Activated CD4-positive, alpha-beta T cell treated with anti-CD3 and anti-CD28 coated beads for 36 hours (primary cell): ENCODE measurements at regions of chr7 and their contacts with region 1.

Region 1: GRCh38 chr7:106736508-106737201 is 75.7 kb upstream of the CCDC71L start:
- DNase-seq: peak; percentile 60
- ATAC-seq: peak; percentile 95
- H3K4me3 Mint-ChIP-seq: no peak overlapping the region
- H3K27ac Mint-ChIP-seq: peak overlapping the region; percentile 75
- H3K4me1 Mint-ChIP-seq: peaks cover 37% of the 10 kb centered on the region
- H3K27me3 Mint-ChIP-seq: no peaks in the 10 kb centered on the region

Region 2: DNA sequence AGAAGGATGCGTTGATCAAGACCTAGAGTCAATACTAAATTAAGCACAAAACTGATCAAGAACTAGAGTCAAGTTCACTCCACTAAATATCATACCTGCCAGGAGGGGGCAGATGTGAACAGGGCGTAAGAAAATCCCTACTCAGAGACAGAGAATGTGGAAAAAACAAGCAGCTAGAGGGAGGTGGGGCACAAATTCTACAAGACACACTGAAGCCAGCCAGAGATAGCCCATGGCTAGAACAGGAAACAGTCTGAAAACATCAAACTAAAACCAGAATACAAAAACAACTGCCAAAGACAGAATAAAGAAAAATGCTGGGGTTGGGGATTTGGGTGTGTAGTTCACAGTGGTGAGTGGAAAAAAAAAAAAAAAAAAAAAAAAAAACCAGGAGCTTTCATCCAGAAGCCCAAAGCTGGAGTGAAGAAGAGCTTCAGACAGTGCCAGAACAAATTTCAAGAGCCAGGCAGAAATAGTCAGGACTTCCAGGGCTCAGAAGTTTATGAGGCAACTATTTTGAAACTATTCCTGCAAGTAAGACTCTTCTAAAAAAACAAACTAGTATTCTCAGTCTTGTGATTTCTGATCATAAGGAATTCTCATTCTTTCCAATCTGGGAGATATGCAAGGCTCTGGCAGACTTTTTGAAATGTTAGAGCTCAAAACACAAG is 194.0 kb before region 1 on chr7:
- CTCF ChIA-PET with region 1: interaction called, 30 read pairs
- POLR2A ChIA-PET with region 1: no interaction called
- intact Hi-C with region 1: loop called (anchors 1 kb)
- DNase-seq: peak; percentile 70
- ATAC-seq: peak; percentile 91
- H3K4me3 Mint-ChIP-seq: no peak overlapping the region
- H3K27ac Mint-ChIP-seq: peak overlapping the region; percentile 4
- H3K4me1 Mint-ChIP-seq: peaks cover 8% of the 10 kb centered on the region
- H3K27me3 Mint-ChIP-seq: peaks cover 3% of the 10 kb centered on the region

Region 3: GRCh38 chr7:106604303-106604923 is 132.2 kb before region 1 on chr7:
- CTCF ChIA-PET with region 1: no interaction called
- POLR2A ChIA-PET with region 1: no interaction called
- intact Hi-C with region 1: loop called in 1 of 2 experiments (anchors 5 kb)
- DNase-seq: peak; percentile 52
- ATAC-seq: peak; percentile 96
- H3K4me3 Mint-ChIP-seq: no peak overlapping the region
- H3K27ac Mint-ChIP-seq: no peak overlapping the region
- H3K4me1 Mint-ChIP-seq: peaks cover 6% of the 10 kb centered on the region
- H3K27me3 Mint-ChIP-seq: no peaks in the 10 kb centered on the region

Region 4: DNA sequence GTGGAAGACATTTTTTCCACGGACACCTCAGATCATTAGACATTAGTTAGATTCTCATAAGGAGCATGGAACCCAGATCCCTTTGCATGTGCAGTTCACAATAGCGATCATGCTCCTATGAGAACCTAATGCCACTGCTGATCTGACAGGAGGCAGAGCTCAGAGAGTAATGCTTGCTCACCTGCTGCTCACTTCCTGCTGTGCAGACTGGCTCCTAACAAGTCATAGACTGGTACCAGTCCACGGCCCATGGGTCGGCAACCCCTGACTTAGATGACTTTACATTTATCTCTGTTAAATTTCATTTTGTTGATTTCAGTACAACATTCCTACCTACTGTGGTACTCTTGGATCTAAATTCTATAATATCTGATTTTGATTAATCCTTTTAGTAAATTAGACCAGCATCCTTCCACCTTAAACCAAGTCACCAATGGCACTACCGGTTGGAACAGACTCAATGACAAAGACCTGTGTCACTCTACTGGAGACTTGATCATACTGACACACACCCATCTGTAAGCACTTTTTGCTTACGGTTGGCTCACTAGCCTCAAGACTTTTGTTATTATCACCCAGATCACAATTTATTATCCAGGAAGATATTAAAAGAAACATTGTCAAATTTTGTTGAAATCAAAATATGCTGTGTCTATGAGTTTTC is 67.7 kb before region 1 on chr7:
- CTCF ChIA-PET with region 1: interaction called, 24 read pairs
- POLR2A ChIA-PET with region 1: no interaction called
- intact Hi-C with region 1: no loop called
- DNase-seq: peak; percentile 16
- ATAC-seq: no peak
- H3K4me3 Mint-ChIP-seq: no peak overlapping the region
- H3K27ac Mint-ChIP-seq: no peak overlapping the region
- H3K4me1 Mint-ChIP-seq: peaks cover 9% of the 10 kb centered on the region
- H3K27me3 Mint-ChIP-seq: no peaks in the 10 kb centered on the region

Region 5: GRCh38 chr7:107743567-107744344 is 1007.1 kb after region 1 on chr7 and contains the start of gene CBLL1:
- CTCF ChIA-PET with region 1: no interaction called
- POLR2A ChIA-PET with region 1: no interaction called
- intact Hi-C with region 1: no loop called
- DNase-seq: peak; percentile 99
- ATAC-seq: peak; percentile 94
- H3K4me3 Mint-ChIP-seq: peak within 1 kb of the TSS; percentile 88
- H3K27ac Mint-ChIP-seq: peak within 1 kb of the TSS; percentile 100
- H3K4me1 Mint-ChIP-seq: peaks cover 44% of the 10 kb centered on the region
- H3K27me3 Mint-ChIP-seq: no peaks in the 10 kb centered on the region
- total RNA-seq, gene CBLL1: 36.9 to 57.9 TPM